ENCODE measurements at regions of chr4 and their contacts with region 1.

Region 1: DNA sequence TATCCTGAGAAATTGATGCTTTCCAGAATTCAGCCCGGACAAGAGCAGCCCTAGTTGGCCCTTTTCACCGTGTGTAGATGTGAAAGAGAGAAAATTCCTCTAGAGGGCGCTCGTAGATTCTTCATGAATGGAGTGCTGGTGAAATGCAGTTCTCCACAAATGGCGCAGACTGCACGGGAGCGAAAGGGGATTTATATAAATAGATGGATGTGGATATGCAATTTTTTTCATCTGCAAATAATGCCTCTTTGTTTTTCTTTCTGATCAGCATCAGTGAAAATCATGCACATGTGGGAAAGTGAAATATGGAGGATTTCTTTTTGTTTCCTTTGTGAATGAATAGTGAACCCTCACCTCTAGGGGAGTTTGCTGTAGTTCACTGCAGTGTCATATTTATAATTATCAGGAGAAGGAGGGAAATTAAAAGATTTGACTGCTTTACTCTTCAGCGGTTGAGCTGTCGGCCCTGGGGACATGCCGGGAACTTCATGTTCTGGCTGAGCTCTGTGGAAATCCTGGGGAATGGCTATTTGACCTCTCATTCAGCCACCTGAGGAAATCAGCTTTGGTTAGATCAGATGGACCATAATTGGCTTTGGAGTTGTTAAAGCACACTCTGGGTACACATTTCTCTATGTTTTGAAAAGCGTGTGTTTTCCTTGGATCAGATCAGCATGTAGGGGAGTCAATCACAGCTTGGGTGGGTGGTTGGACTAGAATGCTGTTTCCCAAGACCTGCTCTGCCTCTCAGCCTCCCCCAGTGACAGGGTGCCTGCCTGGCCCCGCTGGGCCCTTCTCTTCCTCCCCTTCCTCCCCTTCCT is 115.0 kb upstream of the SHISA3 start:
- DNase-seq: peak; percentile 86

Region 2: GRCh38 chr4:42446823-42447222 is 164.5 kb after region 1 on chr4:
- in situ Hi-C with region 1: no loop called
- DNase-seq: no peak

Region 3: GRCh38 chr4:42519803-42520417 is 237.6 kb after region 1 on chr4:
- in situ Hi-C with region 1: loop called (anchors 25 kb)
- DNase-seq: peak; percentile 66